ENCODE measurements at regions of chr16 and their contacts with region 1.

Region 1: GRCh38 chr16:56608043-56608875 is at the start of gene MT2A:
- DNase-seq: peak; percentile 82
- ATAC-seq: peak; percentile 85
- H3K4me3 Mint-ChIP-seq: peak within 1 kb of the TSS; percentile 93
- H3K27ac Mint-ChIP-seq: peak within 1 kb of the TSS; percentile 87
- H3K4me1 Mint-ChIP-seq: peaks cover 36% of the 10 kb centered on the region
- H3K27me3 Mint-ChIP-seq: no peaks in the 10 kb centered on the region
- CTCF ChIP-seq: no peak
- total RNA-seq, gene MT2A: 72.7 and 77.4 TPM in 2 replicates

Region 2: DNA sequence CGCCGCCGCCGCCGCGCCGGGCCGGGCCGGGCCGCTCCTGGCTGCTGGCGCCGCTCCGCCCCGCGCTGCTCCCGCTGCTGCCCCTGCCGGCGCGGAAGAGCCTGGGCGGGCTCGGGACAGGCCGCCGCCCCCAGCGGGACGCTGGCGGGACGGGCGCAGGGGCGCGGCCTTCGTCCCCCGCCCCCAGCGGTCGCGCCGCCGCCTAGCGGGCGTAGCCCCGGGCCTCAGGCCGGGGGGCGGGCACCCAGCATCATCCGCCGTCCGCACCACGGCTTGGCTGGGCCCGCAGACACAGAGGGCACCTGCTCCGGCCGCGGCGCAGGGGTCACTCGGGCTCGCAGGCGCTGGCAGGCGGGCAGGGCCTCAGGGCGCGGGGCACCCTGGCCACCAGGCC is 182.8 kb before region 1 on chr16 and contains the start of gene AMFR:
- CTCF ChIA-PET with region 1: no interaction called
- POLR2A ChIA-PET with region 1: no interaction called
- intact Hi-C with region 1: loop called (anchors 2 kb)
- DNase-seq: peak; percentile 82
- ATAC-seq: peak; percentile 87
- H3K4me3 Mint-ChIP-seq: peak within 1 kb of the TSS; percentile 96
- H3K27ac Mint-ChIP-seq: peak within 1 kb of the TSS; percentile 95
- H3K4me1 Mint-ChIP-seq: peaks cover 44% of the 10 kb centered on the region
- H3K27me3 Mint-ChIP-seq: no peaks in the 10 kb centered on the region
- CTCF ChIP-seq: no peak
- total RNA-seq, gene AMFR: 118 and 134 TPM in 2 replicates

Region 3: DNA sequence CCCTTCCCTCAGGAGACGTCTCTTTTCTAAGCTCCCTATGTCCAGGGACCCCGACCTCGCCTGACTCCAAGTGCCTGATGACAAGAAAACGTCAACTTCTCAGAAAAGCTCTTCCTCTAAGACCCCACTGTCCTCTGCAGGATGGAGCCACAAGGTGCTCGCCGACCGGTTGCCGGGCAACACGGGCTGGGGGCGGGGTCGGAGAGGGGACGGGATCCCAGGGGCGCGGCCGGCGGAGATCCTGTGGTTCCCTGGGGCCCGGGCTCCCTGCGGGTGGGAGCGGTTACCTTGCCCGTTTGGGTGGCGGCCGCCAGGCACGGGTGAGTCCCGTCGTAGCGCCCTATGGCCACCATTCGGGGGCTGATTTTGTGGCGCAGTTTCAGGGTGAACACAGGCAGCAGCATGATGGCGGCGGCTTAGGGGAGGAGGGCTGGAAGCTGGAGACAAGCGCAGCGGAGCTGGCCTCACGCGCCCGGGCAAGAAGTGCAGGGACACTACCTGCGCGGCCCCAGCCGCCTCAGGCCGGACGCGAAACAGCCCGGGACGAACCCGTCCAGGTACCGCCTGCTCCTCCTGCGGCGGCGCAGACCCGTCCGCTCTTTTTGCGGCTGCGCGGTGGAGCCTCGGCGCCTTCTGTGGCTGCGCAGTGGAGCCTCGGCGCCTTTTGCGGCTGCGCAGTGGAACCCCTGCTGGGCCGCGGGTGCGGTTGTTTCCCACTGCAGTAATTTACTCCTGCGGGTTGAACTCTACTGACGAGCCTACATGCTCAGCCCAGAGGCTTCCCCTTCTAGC is 88.6 kb before region 1 on chr16 and contains the start of gene BBS2:
- CTCF ChIA-PET with region 1: no interaction called
- POLR2A ChIA-PET with region 1: interaction called, 3 read pairs
- intact Hi-C with region 1: loop called (anchors 1 kb)
- DNase-seq: peak; percentile 94
- ATAC-seq: peak; percentile 92
- H3K4me3 Mint-ChIP-seq: peak within 1 kb of the TSS; percentile 87
- H3K27ac Mint-ChIP-seq: peak within 1 kb of the TSS; percentile 87
- H3K4me1 Mint-ChIP-seq: peaks cover 20% of the 10 kb centered on the region
- H3K27me3 Mint-ChIP-seq: no peaks in the 10 kb centered on the region
- CTCF ChIP-seq: no peak
- total RNA-seq, gene BBS2: 25.5 and 32.3 TPM in 2 replicates

Region 4: DNA sequence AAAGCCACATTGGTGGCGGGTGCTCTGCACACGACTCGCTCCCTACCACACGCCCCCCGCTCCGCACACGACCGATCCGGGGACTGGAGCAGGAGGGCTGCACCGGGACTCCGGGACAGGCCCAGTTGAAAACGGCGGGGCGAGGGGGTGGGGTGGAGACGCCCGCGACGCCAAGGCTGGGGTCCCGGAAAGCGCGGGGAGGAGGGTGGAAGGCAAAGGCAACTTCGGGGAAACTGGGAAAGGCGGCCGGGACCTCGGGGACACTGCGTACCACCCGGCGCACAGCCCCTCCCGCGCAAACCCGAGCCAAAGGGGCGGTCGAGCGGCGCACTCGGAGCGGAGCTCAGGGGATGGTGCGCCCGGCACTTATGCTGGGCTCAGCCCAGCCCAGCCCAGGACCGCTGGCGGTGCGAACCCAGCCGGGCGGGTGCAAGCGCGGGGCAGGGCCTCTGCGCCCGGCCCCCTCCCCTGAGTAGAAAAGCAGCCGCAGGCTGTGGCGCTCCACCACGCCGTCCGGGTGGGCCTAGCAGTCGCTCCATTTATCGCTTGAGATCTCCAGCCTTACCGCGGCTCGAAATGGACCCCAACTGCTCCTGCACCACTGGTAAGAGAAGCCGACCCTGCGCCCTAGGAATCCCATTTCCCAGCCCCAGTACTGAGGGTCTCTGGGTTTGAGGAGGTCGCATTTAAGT is 24.0 kb after region 1 on chr16 and contains the start of gene MT1M:
- CTCF ChIA-PET with region 1: interaction called, 4 read pairs
- POLR2A ChIA-PET with region 1: interaction called, 6 read pairs
- intact Hi-C with region 1: loop called (anchors 1 kb)
- DNase-seq: no peak
- ATAC-seq: no peak
- H3K4me3 Mint-ChIP-seq: peak within 1 kb of the TSS; percentile 65
- H3K27ac Mint-ChIP-seq: no peak within 1 kb of the TSS
- H3K4me1 Mint-ChIP-seq: peaks cover 43% of the 10 kb centered on the region
- H3K27me3 Mint-ChIP-seq: peaks cover 39% of the 10 kb centered on the region
- CTCF ChIP-seq: no peak
- total RNA-seq, gene MT1M: not detected in 2 replicates

Region 5: DNA sequence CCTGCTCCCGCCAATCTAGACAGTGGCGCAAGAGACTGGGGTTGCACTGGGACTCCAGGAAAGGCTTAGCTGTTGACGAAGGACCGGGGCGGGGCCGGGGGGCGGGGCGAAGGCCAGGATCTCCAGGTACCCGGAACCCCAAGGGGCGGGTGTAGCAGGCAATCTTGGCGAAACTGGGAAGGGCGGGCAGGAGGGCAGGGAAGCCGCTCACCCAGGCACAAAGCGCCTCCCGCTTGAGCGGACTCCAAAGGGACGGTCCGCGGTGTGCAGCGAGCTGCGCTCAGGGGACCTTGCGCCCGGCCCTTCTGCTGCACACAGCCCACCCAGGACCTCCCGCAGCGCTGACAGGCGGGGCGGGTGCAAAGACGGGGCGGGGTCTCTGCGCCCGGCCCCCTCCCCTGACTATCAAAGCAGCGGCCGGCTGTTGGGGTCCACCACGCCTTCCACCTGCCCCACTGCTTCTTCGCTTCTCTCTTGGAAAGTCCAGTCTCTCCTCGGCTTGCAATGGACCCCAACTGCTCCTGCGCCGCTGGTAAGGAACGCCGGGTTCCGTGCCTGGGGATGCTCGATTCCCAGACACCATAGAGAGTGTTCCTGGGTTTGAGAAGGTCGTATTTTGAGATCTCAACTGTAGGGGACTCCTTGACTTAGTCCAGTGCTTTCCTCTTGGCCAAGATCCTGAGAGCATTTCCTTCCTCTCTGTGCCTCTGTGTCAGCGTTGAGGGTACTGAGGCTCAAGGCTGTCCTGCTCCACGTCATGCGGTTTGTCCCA is 49.5 kb after region 1 on chr16 and contains the start of gene MT1F:
- CTCF ChIA-PET with region 1: interaction called, 3 read pairs
- POLR2A ChIA-PET with region 1: interaction called, 11 read pairs
- intact Hi-C with region 1: loop called (anchors 1 kb)
- DNase-seq: peak; percentile 71
- ATAC-seq: peak; percentile 84
- H3K4me3 Mint-ChIP-seq: peak within 1 kb of the TSS; percentile 92
- H3K27ac Mint-ChIP-seq: peak within 1 kb of the TSS; percentile 88
- H3K4me1 Mint-ChIP-seq: peaks cover 39% of the 10 kb centered on the region
- H3K27me3 Mint-ChIP-seq: peaks cover 16% of the 10 kb centered on the region
- CTCF ChIP-seq: no peak
- total RNA-seq, gene MT1F: 21.4 and 22.8 TPM in 2 replicates

Region 6: GRCh38 chr16:56700195-56700594 is 91.9 kb after region 1 on chr16:
- CTCF ChIA-PET with region 1: interaction called, 13 read pairs
- POLR2A ChIA-PET with region 1: no interaction called
- intact Hi-C with region 1: loop called (anchors 2 kb)
- DNase-seq: no peak
- ATAC-seq: no peak
- H3K4me3 Mint-ChIP-seq: no peak overlapping the region
- H3K27ac Mint-ChIP-seq: no peak overlapping the region
- H3K4me1 Mint-ChIP-seq: peaks cover 8% of the 10 kb centered on the region
- H3K27me3 Mint-ChIP-seq: no peaks in the 10 kb centered on the region
- CTCF ChIP-seq: no peak

Region 7: DNA sequence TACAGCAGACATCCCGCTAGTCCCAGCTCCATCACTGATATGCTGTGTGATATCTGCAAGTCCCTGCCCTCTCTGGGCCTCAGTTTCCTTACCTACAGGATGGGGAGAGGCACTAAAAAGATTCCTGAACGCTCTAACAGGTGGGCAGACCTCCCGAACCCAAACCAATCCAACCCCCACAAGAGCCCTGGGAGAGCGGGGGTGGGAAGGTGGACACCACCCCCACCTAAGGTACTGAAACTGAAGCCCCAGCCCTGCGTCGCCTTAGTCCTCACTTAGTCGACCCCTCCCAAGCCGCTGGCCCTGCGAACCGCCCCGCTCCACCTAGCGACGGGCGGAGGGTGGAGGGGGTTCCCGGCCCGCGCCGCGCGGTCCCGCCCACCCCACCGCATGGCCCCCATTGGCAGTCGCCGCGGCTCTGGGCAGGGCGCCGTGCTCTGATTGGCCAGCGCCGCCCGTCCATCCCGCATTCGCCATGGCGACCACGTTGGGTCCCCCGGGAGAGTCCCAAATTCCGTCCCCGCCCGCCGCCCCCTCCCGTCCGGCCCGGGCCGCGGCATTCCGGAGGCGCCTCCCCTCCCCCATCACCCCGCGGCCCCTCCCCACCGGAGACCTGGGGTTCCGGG is 927.5 kb after region 1 on chr16:
- CTCF ChIA-PET with region 1: no interaction called
- POLR2A ChIA-PET with region 1: no interaction called
- intact Hi-C with region 1: loop called (anchors 10 kb)
- DNase-seq: peak; percentile 87
- ATAC-seq: peak; percentile 70
- H3K4me3 Mint-ChIP-seq: peak overlapping the region; percentile 85
- H3K27ac Mint-ChIP-seq: peak overlapping the region; percentile 89
- H3K4me1 Mint-ChIP-seq: peaks cover 83% of the 10 kb centered on the region
- H3K27me3 Mint-ChIP-seq: no peaks in the 10 kb centered on the region
- CTCF ChIP-seq: no peak